Calu3 (cell line): ENCODE measurements at regions of chr1 and their contacts with region 1.

Region 1: DNA sequence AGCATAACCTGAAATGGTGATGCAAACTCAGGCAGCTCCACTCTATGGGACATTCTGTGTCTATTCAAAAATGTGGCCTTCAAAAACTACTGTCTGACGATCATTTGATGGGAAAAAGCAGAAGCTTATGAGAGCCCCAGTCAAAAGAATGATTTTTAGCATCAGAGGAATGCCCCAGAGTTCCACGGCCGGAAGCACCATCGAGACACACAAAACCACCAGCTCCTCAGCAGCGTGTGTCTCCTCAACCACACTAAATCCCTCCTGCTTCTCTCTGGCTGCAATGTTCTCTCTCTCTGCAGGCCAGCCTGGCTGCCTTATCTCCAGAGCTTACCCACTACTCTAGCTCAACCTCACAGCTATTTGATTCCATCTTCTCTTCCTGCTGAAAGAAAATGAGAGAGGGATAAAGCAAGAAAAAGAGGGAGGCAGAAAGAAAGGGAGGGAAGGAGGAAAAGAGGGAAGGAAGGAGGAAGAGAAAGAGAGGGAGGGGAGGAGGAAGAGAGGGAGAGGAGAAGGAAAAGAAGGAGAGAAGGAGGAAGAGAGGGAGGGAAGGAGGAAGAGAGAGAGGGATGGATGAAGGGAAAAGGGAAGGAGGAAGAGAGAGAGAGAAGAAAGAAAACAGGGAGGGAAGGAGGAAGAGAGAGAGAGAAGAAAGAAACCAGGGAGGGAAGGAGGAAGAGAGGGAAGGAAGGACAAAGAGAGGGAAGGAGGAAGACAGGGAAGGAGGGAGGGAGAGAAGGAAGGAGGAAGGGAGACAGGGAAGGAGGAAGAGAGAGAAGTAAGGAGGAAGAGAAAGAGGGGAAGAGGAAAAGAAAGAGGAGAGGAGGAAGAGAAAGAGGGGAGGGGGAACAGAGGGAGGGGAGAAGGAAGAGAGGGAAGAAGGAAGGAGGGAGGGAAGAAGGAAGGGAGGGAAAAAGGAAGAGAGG is 33.5 kb upstream of the LAPTM5 start:
- DNase-seq: no peak
- H3K4me3 Mint-ChIP-seq: no peak overlapping the region
- H3K27ac Mint-ChIP-seq: no peak overlapping the region
- H3K4me1 Mint-ChIP-seq: peaks cover 6% of the 10 kb centered on the region
- H3K27me3 Mint-ChIP-seq: peaks cover 67% of the 10 kb centered on the region
- CTCF ChIP-seq: no peak

Region 2: GRCh38 chr1:29218223-29218622 is 1572.9 kb before region 1 on chr1:
- CTCF ChIA-PET with region 1: interaction called, 12 read pairs
- intact Hi-C with region 1: no loop called
- DNase-seq: no peak
- H3K4me3 Mint-ChIP-seq: no peak overlapping the region
- H3K27ac Mint-ChIP-seq: no peak overlapping the region
- H3K4me1 Mint-ChIP-seq: peaks cover 6% of the 10 kb centered on the region
- H3K27me3 Mint-ChIP-seq: no peaks in the 10 kb centered on the region
- CTCF ChIP-seq: no peak